HCT116 (cell line): ENCODE measurements at regions of chr9 and their contacts with region 1.

Region 1: GRCh38 chr9:105414947-105415661 is 32.7 kb upstream of the FSD1L start:
- DNase-seq: peak; percentile 50
- ATAC-seq: peak; percentile 90
- H3K4me3 ChIP-seq: no peak overlapping the region
- H3K27ac ChIP-seq: no peak overlapping the region
- H3K4me1 ChIP-seq: no peaks in the 10 kb centered on the region
- H3K27me3 ChIP-seq: no peaks in the 10 kb centered on the region
- CTCF ChIP-seq: peak; percentile 74 to 95 (median 76)
- POLR2A ChIP-seq: no peak
- RAD21 ChIP-seq: peak; percentile 95

Region 2: DNA sequence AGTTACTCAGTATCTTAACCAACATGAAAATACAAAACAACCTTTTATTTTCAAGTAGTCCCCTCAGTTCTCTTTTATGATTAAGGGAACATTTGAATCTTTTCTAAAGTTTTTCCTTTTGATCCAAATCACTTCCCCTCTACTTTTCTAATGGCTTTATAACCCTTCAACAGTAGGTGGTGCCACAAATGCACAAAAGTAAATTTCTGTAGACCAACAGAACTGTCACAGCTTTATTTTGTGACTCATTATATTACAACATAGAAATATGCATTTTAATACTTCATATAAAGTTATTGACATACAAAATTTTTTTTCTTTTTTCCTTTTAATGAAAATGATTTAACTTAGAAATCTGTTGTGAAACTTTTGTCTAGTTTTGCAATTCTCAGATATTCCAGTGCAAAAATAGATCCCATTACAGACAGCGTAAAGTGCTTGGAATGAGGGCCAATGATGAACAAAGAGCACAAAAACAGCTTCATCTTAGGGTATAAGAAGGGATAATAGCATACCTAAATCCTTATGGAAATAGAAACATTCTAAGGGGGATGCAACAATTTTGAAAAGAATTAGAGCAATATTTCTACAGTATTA is 634.2 kb before region 1 on chr9:
- CTCF ChIA-PET with region 1: interaction called, 5 read pairs
- POLR2A ChIA-PET with region 1: no interaction called
- RAD21 ChIA-PET with region 1: no interaction called
- intact Hi-C with region 1: loop called (anchors 2 kb)
- DNase-seq: peak; percentile 16
- ATAC-seq: peak; percentile 57
- H3K4me3 ChIP-seq: no peak overlapping the region
- H3K27ac ChIP-seq: no peak overlapping the region
- H3K4me1 ChIP-seq: no peaks in the 10 kb centered on the region
- H3K27me3 ChIP-seq: 0 out of 2 replicates have a peak, but pooled peaks cover 4% of the 10 kb centered on the region
- CTCF ChIP-seq: peak; percentile 47 to 59 (median 50); a peak in 5 of 6 replicates
- POLR2A ChIP-seq: no peak
- RAD21 ChIP-seq: peak; percentile 71

Region 3: GRCh38 chr9:104863180-104863883 is 551.8 kb before region 1 on chr9:
- CTCF ChIA-PET with region 1: interaction called, 7 read pairs
- POLR2A ChIA-PET with region 1: no interaction called
- RAD21 ChIA-PET with region 1: no interaction called
- intact Hi-C with region 1: loop called (anchors 1 kb)
- DNase-seq: peak; percentile 44
- ATAC-seq: peak; percentile 89
- H3K4me3 ChIP-seq: no peak overlapping the region
- H3K27ac ChIP-seq: no peak overlapping the region
- H3K4me1 ChIP-seq: peaks cover 0 to under 1% of the 10 kb centered on the region in 2 experiments; a peak in 1 of 4 replicates
- H3K27me3 ChIP-seq: no peaks in the 10 kb centered on the region
- CTCF ChIP-seq: peak; percentile 81 to 92 (median 82); a peak in 5 of 6 replicates
- POLR2A ChIP-seq: no peak
- RAD21 ChIP-seq: peak; percentile 91

Region 4: GRCh38 chr9:104927912-104928740 is 487.0 kb before region 1 on chr9 and contains the start of gene ABCA1:
- CTCF ChIA-PET with region 1: interaction called, 3 read pairs
- POLR2A ChIA-PET with region 1: no interaction called
- RAD21 ChIA-PET with region 1: no interaction called
- intact Hi-C with region 1: loop called (anchors 1 kb)
- DNase-seq: peak; percentile 29
- ATAC-seq: peak; percentile 50
- H3K4me3 ChIP-seq: peak within 1 kb of the TSS; percentile 49 to 57
- H3K27ac ChIP-seq: peak within 1 kb of the TSS; percentile 33; the same call in 1 of the 2 replicates
- H3K4me1 ChIP-seq: peaks cover 6 to 18% of the 10 kb centered on the region in 2 experiments
- H3K27me3 ChIP-seq: no peaks in the 10 kb centered on the region
- CTCF ChIP-seq: no peak
- POLR2A ChIP-seq: no peak
- RAD21 ChIP-seq: no peak
- total RNA-seq, gene ABCA1: 0.89 TPM

Region 5: DNA sequence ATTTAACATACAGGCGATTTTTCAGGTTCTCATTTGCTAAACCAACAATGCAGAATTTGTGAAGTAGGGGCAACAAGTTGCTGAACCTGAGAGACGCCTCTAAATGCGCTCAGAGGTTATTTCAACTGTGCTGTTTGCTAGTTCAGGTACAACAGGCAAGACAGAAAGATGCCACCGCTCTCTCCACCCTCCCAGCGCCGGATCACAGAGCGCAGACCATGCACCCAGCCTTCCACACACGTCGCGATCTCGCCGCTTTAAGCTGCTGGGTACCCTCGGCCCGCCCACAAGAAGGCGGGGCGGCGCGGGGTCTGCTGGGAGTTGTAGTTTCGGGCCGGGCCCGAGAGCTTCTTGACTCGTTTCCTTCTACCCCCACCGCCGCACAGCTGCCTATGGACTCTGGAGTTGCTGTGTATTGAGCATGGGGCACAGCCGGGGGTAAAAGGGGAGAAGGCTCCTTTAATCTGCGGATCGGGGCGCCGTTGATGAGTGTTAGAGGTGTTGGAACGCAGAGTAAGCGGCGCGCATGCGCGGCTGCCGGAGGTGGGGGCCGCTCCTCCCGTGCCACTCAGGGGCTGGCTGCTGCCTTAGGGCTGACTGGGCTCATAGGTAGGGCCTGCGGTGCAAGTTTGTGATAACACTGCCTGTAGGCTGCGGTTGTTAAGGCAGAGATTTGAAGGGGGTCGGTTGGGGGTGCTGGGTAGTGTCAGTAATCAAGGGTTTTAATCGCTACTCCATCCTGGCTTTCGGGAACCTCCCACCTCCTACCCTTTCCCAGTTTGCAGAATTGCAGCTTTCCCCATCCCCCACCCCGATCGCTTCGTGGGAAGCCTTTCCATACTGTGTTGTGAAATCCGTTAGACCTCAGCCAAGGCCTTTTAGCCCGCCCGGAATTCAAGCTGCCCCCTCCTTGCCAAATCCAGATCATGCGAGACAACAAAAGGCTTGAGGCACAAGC is 446.8 kb before region 1 on chr9:
- CTCF ChIA-PET with region 1: interaction called, 4 read pairs
- POLR2A ChIA-PET with region 1: no interaction called
- RAD21 ChIA-PET with region 1: no interaction called
- intact Hi-C with region 1: loop called (anchors 10 kb)
- DNase-seq: peak; percentile 54
- ATAC-seq: peak; percentile 97
- H3K4me3 ChIP-seq: peak overlapping the region; percentile 54 to 57
- H3K27ac ChIP-seq: peak overlapping the region; percentile 52; the same call in 1 of the 2 replicates
- H3K4me1 ChIP-seq: peaks cover 4 to 14% of the 10 kb centered on the region in 2 experiments; a peak in 2 of 4 replicates
- H3K27me3 ChIP-seq: no peaks in the 10 kb centered on the region
- CTCF ChIP-seq: no peak
- POLR2A ChIP-seq: peak; percentile 81
- RAD21 ChIP-seq: no peak

Region 6: DNA sequence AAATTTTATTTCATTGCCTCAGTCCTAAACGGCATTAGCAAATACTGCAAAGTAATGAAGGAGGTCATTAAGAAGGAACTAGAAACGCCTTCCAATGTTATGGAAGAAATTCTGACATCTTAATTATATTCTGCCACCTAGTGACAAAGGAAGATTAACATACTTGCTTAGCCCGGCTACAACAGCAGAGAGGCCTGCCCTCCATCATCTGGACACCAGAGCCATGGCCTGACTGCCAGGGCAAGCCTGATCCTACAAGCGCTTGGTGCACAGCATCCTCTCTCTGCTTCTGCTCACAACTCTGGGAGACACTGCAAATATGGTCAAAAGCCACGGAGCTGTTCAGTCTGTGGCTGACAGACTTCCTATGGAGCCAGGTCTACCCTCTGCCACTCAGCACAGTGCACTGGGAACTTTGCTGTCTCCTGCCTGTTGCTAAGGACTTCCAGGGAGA is 257.9 kb before region 1 on chr9:
- CTCF ChIA-PET with region 1: interaction called, 3 read pairs
- POLR2A ChIA-PET with region 1: no interaction called
- RAD21 ChIA-PET with region 1: interaction called in 1 of 2 experiments, 3 read pairs
- intact Hi-C with region 1: loop called (anchors 1 kb)
- DNase-seq: peak; percentile 24
- ATAC-seq: peak; percentile 88
- H3K4me3 ChIP-seq: no peak overlapping the region
- H3K27ac ChIP-seq: no peak overlapping the region
- H3K4me1 ChIP-seq: peaks cover 4 to 13% of the 10 kb centered on the region in 2 experiments; a peak in 3 of 4 replicates
- H3K27me3 ChIP-seq: no peaks in the 10 kb centered on the region
- CTCF ChIP-seq: peak; percentile 27 to 64 (median 56); a peak in 4 of 6 replicates
- POLR2A ChIP-seq: no peak
- RAD21 ChIP-seq: peak; percentile 80

Region 7: GRCh38 chr9:105244003-105244733 is 170.9 kb before region 1 on chr9 and contains the start of gene SLC44A1:
- CTCF ChIA-PET with region 1: no interaction called
- POLR2A ChIA-PET with region 1: interaction called, 5 read pairs
- RAD21 ChIA-PET with region 1: no interaction called
- intact Hi-C with region 1: loop called (anchors 2 kb)
- DNase-seq: peak; percentile 83
- ATAC-seq: peak; percentile 92
- H3K4me3 ChIP-seq: peak within 1 kb of the TSS; percentile 59 to 94
- H3K27ac ChIP-seq: peak within 1 kb of the TSS; percentile 90
- H3K4me1 ChIP-seq: peaks cover 8 to 17% of the 10 kb centered on the region in 2 experiments; a peak in 3 of 4 replicates
- H3K27me3 ChIP-seq: peaks cover 20% of the 10 kb centered on the region
- CTCF ChIP-seq: no peak
- POLR2A ChIP-seq: peak; percentile 42
- RAD21 ChIP-seq: no peak
- total RNA-seq, gene SLC44A1: 44.1 TPM